Activated CD4-positive, alpha-beta T cell treated with anti-CD3 and anti-CD28 coated beads, Interleukin-2, amount 10 ng/mL, durations not matched to agents 24 days and 14 days (primary cell): ENCODE measurements at regions of chr7 and their contacts with region 1.

Region 1: GRCh38 chr7:3042861-3043489 is 692 bp downstream of the CARD11 start:
- DNase-seq: peak; percentile 91
- H3K4me3 Mint-ChIP-seq: peak overlapping the region; percentile 96
- H3K27ac Mint-ChIP-seq: peak overlapping the region; percentile 94
- H3K4me1 Mint-ChIP-seq: peaks cover 40% of the 10 kb centered on the region
- H3K27me3 Mint-ChIP-seq: no peaks in the 10 kb centered on the region

Region 2: GRCh38 chr7:2894118-2894940 is 148.6 kb before region 1 on chr7:
- intact Hi-C with region 1: loop called (anchors 5 kb)
- DNase-seq: peak; percentile 86
- H3K4me3 Mint-ChIP-seq: peak overlapping the region; percentile 88
- H3K27ac Mint-ChIP-seq: peak overlapping the region; percentile 99
- H3K4me1 Mint-ChIP-seq: peaks cover 26% of the 10 kb centered on the region
- H3K27me3 Mint-ChIP-seq: no peaks in the 10 kb centered on the region

Region 3: DNA sequence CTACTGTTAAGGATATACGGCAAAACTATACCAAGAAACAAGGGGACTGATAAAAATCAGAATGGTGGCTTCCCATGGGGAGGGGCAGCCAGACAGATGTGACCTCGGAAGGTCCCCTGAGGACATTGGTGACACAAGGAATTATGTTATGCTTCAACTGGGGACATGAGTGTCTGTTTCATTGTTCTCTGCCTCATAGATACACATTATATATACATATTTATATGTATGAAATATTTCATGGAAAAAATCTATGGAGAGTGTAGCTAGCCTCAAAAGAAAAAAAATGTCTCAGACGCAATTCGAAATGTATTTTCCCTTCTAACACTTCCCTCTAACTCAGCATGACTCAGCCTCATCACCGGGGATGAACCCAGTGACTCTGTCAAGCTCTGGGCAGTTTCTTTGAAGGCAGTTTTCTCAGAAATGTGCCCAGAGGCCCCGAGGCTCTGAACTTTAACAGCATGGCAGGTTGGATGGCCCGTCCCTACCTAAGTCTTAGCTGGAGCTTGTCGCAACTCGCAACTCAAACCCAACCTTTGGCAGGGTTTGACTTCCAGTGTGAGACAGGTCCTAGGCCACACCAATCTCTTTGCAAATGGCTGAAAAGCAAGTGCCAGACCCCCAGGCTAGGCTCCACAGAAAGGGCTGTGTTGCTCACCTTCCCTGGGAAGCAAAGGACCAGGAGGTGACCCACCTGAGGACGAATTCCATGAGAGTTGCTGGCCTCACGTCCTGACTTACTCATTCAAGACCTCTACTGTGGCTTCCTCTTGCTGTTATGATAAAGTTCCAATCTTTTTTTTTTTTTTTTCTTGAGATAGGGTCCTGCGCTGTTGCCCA is 86.2 kb before region 1 on chr7:
- intact Hi-C with region 1: loop called (anchors 1 kb)
- DNase-seq: peak; percentile 80
- H3K4me3 Mint-ChIP-seq: peak overlapping the region; percentile 55
- H3K27ac Mint-ChIP-seq: peak overlapping the region; percentile 87
- H3K4me1 Mint-ChIP-seq: peaks cover 60% of the 10 kb centered on the region
- H3K27me3 Mint-ChIP-seq: no peaks in the 10 kb centered on the region

Region 4: DNA sequence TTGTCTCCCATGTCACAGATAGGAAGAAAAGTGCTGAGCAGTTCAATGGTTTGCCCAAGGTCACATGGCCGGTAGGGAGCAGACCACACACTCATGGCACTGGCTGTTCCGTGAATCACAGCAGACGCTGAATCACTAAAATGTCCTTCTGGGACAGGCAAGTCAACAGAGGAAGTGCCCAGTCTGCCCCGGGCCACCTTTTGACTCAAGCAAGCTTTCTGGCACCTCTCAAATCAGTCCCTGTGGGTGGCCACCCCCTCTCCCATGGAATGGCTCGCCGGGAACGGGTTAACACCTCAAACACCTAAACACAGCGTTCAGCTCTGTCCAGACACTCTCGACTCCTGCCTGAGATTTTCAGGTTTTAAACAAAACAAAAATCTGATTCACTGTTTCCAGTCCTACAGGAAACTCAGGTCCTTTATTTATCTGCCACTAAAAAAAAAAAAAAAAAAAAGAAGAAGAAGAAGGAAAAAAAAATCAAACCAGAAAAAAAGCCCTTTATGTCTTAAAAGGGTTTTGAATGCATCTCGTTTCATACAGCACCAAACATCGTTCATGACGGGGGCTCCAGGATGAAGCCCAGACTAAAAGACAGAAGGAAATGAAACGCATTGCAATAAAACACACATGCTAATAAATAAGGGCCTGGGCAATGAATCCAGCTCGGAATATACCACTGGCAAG is 14.8 kb before region 1 on chr7:
- intact Hi-C with region 1: loop called (anchors 1 kb)
- DNase-seq: peak; percentile 68
- H3K4me3 Mint-ChIP-seq: peak overlapping the region; percentile 66
- H3K27ac Mint-ChIP-seq: peak overlapping the region; percentile 87
- H3K4me1 Mint-ChIP-seq: peaks cover 34% of the 10 kb centered on the region
- H3K27me3 Mint-ChIP-seq: no peaks in the 10 kb centered on the region

Region 5: GRCh38 chr7:3092468-3092867 is 49.5 kb after region 1 on chr7:
- intact Hi-C with region 1: loop called (anchors 1 kb)
- DNase-seq: peak; percentile 93
- H3K4me3 Mint-ChIP-seq: peak overlapping the region; percentile 22
- H3K27ac Mint-ChIP-seq: peak overlapping the region; percentile 86
- H3K4me1 Mint-ChIP-seq: peaks cover 51% of the 10 kb centered on the region
- H3K27me3 Mint-ChIP-seq: no peaks in the 10 kb centered on the region